ENCODE measurements at regions of chr12 and their contacts with region 1.

Region 1: DNA sequence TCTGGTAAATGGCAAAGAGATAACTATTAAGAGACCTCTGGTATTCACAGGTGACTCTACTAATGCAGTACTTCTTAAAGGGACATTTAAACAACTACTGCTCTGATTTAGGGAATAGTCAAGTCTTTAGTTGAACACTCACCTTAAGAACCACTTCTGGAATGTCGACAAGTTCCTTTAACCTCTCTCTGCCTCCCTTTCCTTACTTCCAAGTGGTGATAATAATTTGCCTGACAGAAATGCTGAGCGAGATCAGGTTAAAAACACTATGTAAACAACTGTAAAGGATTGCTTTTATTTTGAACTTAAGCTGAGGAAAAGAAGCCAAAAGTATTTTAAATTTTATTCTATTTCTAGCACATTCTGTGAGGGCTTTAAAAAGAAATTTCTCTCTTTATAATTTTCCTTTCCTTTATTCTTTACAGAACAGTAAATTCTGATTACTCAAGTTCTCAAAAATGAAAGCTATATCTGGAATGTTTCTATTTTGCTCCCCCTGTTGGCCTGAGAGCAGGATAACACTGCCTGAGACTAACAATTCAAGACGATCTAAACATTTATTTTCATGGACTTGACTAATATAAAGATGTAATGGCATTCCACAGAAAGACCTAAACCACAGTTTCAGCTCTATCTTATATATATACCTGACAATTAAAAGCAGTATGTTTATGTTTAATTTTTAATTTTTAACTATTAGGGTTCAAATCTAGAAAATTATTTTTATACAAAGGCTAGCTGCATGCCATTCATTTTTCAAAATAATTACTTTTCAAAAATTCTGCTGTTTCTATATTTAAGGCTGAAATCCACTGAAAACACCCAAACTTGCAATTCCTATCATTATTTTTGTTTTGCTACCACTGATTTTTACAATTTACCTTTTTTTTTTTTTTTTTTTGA is 29.2 kb downstream of the ZCCHC8 start:
- DNase-seq: peak; percentile 68
- H3K4me3 ChIP-seq: no peak overlapping the region
- H3K27ac ChIP-seq: no peak overlapping the region
- H3K4me1 ChIP-seq: no peaks in the 10 kb centered on the region
- CTCF ChIP-seq: peak; percentile 97

Region 2: GRCh38 chr12:122336015-122336946 is 135.3 kb before region 1 on chr12:
- CTCF ChIA-PET with region 1: no interaction called
- POLR2A ChIA-PET with region 1: no interaction called
- intact Hi-C with region 1: loop called (anchors 5 kb)
- DNase-seq: peak; percentile 69
- H3K4me3 ChIP-seq: no peak overlapping the region
- H3K27ac ChIP-seq: no peak overlapping the region
- H3K4me1 ChIP-seq: no peaks in the 10 kb centered on the region
- CTCF ChIP-seq: peak; percentile 98

Region 3: DNA sequence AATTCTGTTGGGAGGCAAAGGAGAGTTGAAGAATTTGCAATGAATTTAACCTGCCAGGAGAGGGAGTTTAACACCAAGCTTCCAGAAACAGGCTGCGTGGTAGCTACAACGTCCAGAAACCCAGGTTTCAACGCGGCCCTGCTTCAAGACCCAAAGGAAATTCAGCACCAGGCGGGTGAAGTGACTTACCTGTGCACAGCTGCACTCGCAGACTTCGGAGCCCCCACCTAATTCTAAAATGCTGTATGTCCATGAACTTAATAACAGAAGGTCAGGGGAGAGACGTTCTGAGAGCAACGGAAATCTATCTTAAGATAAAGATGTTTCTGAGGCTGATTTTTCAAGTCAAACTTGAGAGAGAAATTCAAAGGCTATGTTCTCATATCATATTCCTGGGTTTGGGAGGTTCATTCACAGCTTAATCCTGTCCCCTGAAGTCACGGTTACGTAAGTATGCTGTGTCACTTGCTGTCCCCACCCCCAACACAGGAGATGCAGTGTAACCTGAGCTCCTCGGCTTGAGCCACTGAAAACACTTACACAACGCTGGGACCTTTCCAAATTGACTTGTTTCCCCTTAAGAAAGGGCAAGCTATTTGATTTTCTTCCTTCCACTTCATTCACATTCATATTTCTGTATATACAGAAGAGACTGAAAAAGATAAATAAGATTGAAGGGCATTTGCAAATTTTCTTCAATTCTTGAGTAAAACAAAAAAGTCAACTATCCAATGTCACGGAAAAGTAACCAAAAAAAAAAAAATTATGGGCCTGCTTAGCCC is 71.8 kb before region 1 on chr12:
- CTCF ChIA-PET with region 1: interaction called, 9 read pairs
- POLR2A ChIA-PET with region 1: interaction called, 6 read pairs
- intact Hi-C with region 1: loop called (anchors 1 kb)
- DNase-seq: peak; percentile 84
- H3K4me3 ChIP-seq: peak overlapping the region; percentile 26
- H3K27ac ChIP-seq: peak overlapping the region; percentile 32
- H3K4me1 ChIP-seq: peaks cover 14% of the 10 kb centered on the region
- CTCF ChIP-seq: peak; percentile 93